ENCODE measurements at regions of chr6 and their contacts with region 1.

Region 1: DNA sequence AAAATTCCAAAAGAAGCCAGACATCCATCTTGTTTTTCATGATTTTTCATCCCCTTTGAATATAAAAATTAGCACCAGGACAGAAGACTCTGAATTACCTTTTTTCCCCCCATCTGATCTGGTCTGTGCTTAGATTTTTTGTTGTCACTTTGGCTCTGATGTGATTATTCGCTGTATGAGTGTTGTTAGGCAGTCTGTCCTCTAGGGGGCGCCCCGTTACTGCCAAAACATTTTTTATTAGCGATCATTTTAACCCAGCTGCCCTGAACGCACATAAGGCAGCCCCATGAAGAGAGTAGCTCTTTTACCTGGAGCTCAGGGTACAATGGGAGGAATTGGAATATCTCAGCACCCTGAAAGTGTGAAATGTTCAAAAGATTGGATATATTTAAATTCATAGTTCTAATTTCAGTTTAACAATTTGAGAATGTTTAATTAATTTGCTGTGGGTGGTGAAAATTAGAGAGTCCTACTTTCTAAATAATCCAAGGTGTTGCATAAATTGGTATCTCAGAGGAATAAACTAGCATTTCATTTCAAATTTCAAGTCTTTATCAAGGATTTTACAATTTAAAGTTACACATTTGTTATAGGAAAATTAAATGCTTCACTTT is 60.8 kb downstream of the PRPH2 start:
- DNase-seq: peak; percentile 59
- CTCF ChIP-seq: peak; percentile 78

Region 2: DNA sequence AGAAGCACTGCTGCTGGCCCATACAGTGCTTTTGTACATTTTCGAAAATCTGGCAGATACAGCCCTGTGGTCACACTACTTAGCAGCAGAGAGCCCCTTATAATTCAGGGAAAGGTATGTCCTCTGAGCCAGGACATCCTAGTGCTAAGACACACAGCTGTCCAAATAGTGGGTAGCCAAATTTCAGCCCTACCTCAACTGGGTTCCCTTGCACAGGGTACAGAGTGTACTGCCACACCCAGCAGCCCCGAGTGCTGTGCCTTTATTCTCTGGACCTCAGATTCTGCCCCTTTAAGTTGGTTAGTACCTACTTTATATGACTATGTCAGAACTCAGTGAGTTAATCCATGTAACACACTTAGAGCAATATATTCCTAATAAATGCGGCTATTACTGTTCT is 13.1 kb after region 1 on chr6:
- CTCF ChIA-PET with region 1: interaction called, 24 read pairs
- POLR2A ChIA-PET with region 1: no interaction called
- DNase-seq: no peak
- CTCF ChIP-seq: no peak

Region 3: DNA sequence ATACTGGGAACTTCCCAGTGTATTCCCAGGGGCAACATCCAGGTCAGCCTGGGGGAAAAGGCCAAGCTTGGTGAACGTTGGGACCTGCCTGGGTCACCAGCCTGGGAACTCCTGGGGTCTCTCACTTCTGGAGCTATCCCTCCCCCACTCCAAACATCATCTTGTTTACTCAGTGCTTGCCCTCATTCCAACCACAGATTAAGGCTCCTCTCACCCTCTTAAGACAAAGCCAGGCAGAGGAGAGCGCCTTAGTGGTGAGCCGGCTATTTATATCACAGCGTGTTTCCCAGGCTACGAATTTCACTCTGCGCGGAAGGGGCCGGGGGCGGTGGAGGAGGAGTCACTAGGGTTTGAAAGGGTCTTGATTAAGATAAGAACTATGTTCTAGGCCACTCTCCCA is 48.7 kb after region 1 on chr6:
- CTCF ChIA-PET with region 1: no interaction called
- POLR2A ChIA-PET with region 1: no interaction called
- DNase-seq: no peak
- CTCF ChIP-seq: no peak

Region 4: DNA sequence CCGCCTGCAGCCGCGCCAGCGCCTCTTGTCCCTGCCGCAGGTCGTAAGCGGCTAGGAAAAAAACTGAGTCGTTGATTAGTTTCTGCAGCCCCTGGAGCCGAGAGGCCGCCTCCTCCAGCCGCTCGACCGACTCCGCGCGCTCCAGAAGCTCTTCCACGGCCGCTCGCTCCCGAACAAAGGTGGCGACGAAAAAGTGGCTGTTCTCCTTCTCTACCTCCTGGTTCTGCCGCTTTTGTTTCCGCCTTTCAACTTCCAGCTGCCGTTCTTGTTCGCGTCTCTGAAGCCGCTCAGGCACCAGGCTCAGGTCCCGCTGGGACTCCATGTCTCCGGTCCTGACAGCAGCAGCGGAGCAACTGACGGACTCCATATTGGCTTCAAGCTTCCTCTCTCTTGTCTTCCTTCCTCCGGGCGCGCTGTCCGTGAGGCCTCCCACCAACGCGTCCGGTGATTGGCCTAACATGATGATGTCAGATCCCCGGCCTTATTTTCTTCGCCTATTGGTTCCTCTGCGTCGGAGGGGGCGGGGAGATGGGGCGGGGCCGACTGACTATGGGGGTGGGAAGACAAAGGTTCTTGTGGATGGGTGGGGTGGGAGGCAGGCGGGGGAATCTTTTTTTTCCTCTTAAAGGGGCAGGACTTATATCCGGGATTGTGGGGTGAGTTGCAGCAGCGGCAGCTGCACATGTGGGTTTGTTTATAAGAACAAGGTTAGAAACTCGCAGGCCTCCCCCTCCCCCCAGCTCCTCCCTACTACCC is 84.2 kb after region 1 on chr6 and contains the start of gene TBCC:
- CTCF ChIA-PET with region 1: interaction called, 12 read pairs
- POLR2A ChIA-PET with region 1: no interaction called
- DNase-seq: peak; percentile 98
- CTCF ChIP-seq: no peak

Region 5: GRCh38 chr6:42879372-42880239 is 218.0 kb after region 1 on chr6 and contains the start of gene RPL7L1:
- CTCF ChIA-PET with region 1: interaction called, 34 read pairs
- POLR2A ChIA-PET with region 1: interaction called, 3 read pairs
- DNase-seq: peak; percentile 83
- CTCF ChIP-seq: no peak

Region 6: DNA sequence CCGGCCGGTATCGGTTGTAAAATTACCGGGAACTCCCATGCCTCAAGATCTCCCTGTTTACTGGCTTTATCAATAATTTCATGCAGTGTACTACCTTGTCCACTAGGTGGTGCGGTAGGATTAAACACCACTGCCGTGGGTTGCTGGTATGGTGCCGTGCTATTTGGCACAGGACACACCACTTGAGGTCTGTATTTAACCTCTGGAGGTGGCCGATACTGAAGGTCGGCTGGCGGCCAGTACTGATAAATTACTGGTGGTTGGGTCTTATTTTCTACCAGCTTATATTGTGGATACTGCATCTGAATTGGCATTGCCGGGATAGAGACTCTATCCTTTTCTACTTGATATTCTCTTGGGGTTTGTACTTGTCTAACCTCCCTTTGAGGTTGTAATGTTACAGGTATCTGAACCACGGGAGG is 239.9 kb after region 1 on chr6:
- CTCF ChIA-PET with region 1: interaction called, 13 read pairs
- POLR2A ChIA-PET with region 1: no interaction called
- DNase-seq: peak; percentile 58
- CTCF ChIP-seq: peak; percentile 92